Motor neuron (in vitro differentiated cells): ENCODE measurements at regions of chr17 and their contacts with region 1.

Region 1: DNA sequence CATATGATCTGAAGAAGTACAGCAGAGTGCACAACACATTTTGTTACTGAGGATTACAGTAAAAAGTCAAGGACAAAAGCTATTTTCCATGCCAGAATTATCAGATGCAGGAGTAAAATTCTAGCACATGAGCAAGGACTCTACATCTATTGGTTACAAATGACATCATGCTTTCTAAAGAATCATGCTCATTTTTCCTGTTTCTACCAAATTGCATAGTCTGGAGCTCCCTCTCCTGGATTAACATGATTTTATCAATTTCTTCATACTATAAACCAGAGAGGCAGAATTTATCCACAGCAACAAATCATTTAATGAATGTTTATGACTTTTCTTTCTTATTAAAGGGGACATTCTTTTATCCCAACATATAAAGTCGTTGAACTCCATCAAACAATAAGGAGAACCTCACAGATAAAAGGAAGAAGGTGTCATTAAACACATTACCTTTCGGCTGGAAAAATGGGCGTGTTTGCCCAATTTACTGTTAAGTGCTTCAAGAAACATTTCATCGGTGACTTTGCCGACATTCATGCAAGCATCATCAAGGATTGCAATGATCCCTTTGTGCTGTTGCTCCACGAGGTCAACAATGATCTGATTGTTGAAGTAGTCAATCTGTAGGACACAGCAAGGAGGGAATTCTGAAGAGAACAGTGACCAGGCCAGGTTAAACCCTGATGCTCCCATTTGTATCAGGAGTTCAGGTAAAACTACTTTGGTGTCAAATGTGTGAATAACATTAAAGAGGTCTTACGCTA is 121.7 kb downstream of the MYO1D start:
- ATAC-seq: peak; percentile 77 to 95 (median 89)
- H3K4me3 ChIP-seq: no peak overlapping the region
- H3K27ac ChIP-seq: no peak overlapping the region
- H3K4me1 ChIP-seq: peaks cover 0 to 4% of the 10 kb centered on the region in 2 donors

Region 2: GRCh38 chr17:32240750-32241149 is 514.5 kb before region 1 on chr17:
- in situ Hi-C with region 1: loop called in 1 of 9 experiments (anchors 25 kb)
- ATAC-seq: peak in 2 of 8 experiments; percentile 49 to 61
- H3K4me3 ChIP-seq: no peak overlapping the region
- H3K27ac ChIP-seq: no peak overlapping the region
- H3K4me1 ChIP-seq: peaks cover 11 to 17% of the 10 kb centered on the region in 2 donors

Region 3: DNA sequence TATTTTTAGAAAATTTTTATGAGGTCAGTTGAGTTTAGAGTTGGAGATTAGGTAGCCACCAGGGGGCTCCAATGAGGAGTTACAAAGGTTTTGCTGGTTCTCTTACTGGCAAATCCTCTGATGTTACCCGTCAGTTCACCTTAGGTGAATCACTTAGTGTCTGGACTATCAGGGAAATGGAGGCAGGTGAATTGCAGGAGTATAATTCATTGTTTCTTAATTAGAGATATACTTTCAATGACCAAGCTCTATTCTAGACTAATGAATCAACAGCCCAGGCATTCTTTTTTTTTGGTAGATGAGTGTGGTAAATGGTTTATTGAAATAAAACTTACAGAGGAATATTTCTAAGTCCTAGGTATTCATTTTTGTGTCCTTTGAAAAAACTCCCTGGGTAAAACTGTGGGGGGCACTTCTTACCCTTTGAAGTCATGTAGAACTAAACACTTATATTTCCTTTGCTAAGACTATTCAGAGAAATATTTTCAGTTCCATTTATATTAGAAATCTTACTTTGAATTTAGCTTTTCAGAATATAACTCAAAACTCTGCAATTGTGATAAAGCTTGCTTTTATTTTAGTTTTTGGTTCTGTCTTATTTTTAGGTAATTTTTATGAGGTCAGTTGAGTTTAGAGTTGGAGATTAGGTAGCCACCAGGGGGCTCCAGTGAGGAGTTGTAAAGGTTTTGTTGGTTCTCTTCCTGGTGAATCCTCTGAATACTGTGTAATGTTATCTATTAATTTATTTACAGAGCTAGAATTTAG is 293.2 kb before region 1 on chr17:
- in situ Hi-C with region 1: loop called in 4 of 9 experiments (anchors 10 to 25 kb)
- ATAC-seq: peak in 4 of 8 experiments; percentile 49 to 64 (median 62)
- H3K4me3 ChIP-seq: no peak overlapping the region
- H3K27ac ChIP-seq: no peak overlapping the region
- H3K4me1 ChIP-seq: no peaks in the 10 kb centered on the region

Region 4: DNA sequence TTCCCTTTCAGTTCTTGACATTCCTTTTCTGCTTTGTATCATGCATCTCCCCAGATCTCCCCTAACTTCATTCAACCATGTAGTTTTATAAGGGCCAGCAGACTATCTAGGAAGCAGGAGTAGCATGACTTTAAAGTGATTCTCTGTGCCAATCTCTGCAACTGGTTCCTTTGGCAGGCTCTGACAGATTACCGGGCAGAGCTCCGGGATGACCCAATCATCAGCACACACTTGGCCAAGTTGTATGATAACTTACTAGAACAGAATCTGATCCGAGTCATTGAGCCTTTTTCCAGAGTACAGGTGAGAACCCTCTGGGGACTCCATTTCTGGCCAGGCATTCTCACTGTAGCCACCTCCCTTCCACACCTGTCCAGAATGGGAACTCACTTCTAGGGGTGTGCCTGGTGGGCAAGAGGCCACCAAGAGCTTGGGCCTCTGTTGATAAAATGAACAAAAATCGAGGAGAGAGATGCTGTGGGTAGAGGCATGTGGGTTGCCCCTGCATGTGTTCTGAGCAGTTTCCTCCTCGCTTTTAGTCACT is 276.1 kb before region 1 on chr17:
- in situ Hi-C with region 1: loop called in 8 of 9 experiments (anchors 10 to 25 kb)
- ATAC-seq: no peak
- H3K4me3 ChIP-seq: no peak overlapping the region
- H3K27ac ChIP-seq: no peak overlapping the region
- H3K4me1 ChIP-seq: peaks cover 6 to 10% of the 10 kb centered on the region in 2 donors

Region 5: GRCh38 chr17:32486111-32486700 is 269.0 kb before region 1 on chr17:
- in situ Hi-C with region 1: loop called in 3 of 9 experiments (anchors 10 to 25 kb)
- ATAC-seq: peak; percentile 74 to 88 (median 77)
- H3K4me3 ChIP-seq: peak overlapping the region; percentile 62 to 99 (median 75)
- H3K27ac ChIP-seq: peak overlapping the region; percentile 86 to 98
- H3K4me1 ChIP-seq: peaks cover 49 to 51% of the 10 kb centered on the region in 2 donors

Region 6: GRCh38 chr17:32659419-32659842 is 95.8 kb before region 1 on chr17:
- in situ Hi-C with region 1: loop called in 1 of 9 experiments (anchors 25 kb)
- ATAC-seq: peak; percentile 51 to 99 (median 74)
- H3K4me3 ChIP-seq: no peak overlapping the region
- H3K27ac ChIP-seq: no peak overlapping the region
- H3K4me1 ChIP-seq: no peaks in the 10 kb centered on the region

Region 7: DNA sequence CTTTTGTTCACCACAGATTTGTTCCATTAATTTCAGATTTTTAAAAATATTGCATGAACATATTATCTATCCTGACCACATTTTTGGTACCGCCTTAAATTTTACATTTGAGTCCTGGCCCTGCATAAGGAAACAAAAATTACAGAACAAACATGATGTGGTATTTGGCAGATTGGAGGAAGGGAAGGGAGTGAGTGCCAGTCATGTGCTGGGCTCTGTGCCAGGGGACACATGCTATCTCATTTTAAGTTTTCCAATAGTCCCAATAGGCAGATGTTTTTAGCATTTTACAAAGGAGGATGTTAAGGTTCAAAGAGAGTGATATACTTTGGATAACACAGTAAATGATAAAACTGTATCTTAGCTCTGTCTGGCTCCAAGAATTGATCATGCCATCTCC is 83.3 kb before region 1 on chr17:
- in situ Hi-C with region 1: loop called in 2 of 9 experiments (anchors 10 to 25 kb)
- ATAC-seq: peak in 3 of 8 experiments; percentile 29 to 44 (median 40)
- H3K4me3 ChIP-seq: no peak overlapping the region
- H3K27ac ChIP-seq: no peak overlapping the region
- H3K4me1 ChIP-seq: no peaks in the 10 kb centered on the region